ENCODE measurements at regions of chr2 and their contacts with region 1.

Region 1: GRCh38 chr2:202172439-202173211 is 65.8 kb downstream of the SUMO1 start:
- DNase-seq: no peak
- H3K4me3 ChIP-seq: no peak overlapping the region
- H3K27ac ChIP-seq: no peak overlapping the region
- H3K4me1 ChIP-seq: no peaks in the 10 kb centered on the region
- H3K27me3 ChIP-seq: peaks cover 3% of the 10 kb centered on the region
- CTCF ChIP-seq: no peak
- POLR2A ChIP-seq: no peak

Region 2: GRCh38 chr2:201964631-201965206 is 207.9 kb before region 1 on chr2:
- intact Hi-C with region 1: loop called in 1 of 2 experiments (anchors 5 kb)
- DNase-seq: no peak
- H3K4me3 ChIP-seq: no peak overlapping the region
- H3K27ac ChIP-seq: no peak overlapping the region
- H3K4me1 ChIP-seq: no peaks in the 10 kb centered on the region
- H3K27me3 ChIP-seq: no peaks in the 10 kb centered on the region
- CTCF ChIP-seq: no peak
- POLR2A ChIP-seq: no peak

Region 3: GRCh38 chr2:202375609-202376408 is 203.2 kb after region 1 on chr2 and contains the start of gene BMPR2:
- intact Hi-C with region 1: no loop called
- DNase-seq: peak; percentile 89 to 94 (median 92)
- H3K4me3 ChIP-seq: peak within 1 kb of the TSS; percentile 44 to 94 (median 85)
- H3K27ac ChIP-seq: peak within 1 kb of the TSS; percentile 86 to 99 (median 96)
- H3K4me1 ChIP-seq: peaks cover 14 to 43% of the 10 kb centered on the region in 2 donors
- H3K27me3 ChIP-seq: no peaks in the 10 kb centered on the region
- CTCF ChIP-seq: no peak
- POLR2A ChIP-seq: peak; percentile 83 to 94
- total RNA-seq, gene BMPR2: 29.1 to 123 (median 94.0) TPM

Measured in adrenal gland (tissue), 19 donors.